Dorsolateral prefrontal cortex (tissue), 120 donors: ENCODE measurements at regions of chr5 and their contacts with region 1.

Region 1: DNA sequence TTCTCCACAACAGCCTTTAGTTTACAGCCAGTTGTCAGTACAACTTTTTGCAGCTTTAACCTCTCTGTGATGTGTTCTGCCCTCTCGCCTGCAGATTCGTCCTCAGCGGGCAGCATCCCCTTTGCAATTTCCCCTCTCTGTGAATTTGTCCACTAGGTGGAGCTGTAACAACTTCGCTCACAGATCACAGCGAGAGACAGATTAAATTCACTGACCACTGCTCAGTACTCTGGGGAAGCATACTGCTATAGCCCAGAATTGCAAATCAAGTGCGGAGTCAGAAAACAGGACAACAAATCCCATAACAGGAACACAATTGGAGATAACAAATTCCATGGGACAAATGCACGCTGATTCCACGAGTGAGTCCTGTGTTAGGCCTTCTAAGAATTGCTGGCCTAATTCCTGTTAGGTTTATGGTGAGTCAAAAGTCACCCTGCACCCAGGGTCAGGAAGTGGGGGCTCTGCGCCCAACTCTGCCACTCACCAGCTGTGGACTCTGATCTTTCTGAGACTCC is 2124.9 kb downstream of the MAT2B start:
- DNase-seq: peak in 7 of 10 donors; percentile 16 to 60 (median 48)
- H3K4me3 ChIP-seq: peak overlapping the region in 1 of 59 donors; percentile 17
- H3K27ac ChIP-seq: no peak overlapping the region
- H3K27me3 ChIP-seq: no peaks in the 10 kb centered on the region
- CTCF ChIP-seq: peak; percentile 75 to 90 (median 84)

Region 2: DNA sequence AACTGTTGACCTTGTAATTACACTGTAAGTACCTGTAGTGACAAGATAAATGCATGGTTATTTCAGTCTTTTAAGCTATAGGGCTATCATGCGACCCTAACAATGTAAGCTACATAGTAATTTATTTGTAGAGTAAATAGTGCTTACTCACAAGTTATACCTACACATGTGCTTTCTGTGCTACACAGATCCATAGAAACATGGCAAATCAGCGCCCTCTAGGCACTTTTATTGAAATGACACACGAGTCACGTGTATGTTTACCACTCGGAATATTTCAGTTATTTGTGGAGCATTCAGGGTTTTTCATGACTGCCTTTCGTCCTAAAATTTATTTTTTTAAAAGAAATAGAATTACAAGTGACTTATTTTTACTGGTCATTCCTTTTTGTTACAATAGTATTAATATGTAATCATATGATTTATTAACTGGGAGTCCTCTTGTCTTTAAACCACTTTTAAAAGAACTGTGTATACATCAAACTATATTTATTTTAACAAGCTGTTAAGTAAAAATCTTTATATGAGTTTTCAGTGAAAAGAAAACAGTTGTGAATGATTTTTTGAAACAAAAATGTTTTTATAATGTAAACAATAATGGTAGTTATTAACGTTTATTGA is 1418.8 kb after region 1 on chr5:
- intact Hi-C with region 1: loop called in 1 of 2 experiments (anchors 5 kb)
- DNase-seq: peak in 2 of 10 donors; percentile 47 to 59
- H3K4me3 ChIP-seq: no peak overlapping the region
- H3K27ac ChIP-seq: no peak overlapping the region
- H3K27me3 ChIP-seq: no peaks in the 10 kb centered on the region
- CTCF ChIP-seq: peak; percentile 34 to 79 (median 61)